ENCODE measurements at regions of chr12 and their contacts with region 1.

Region 1: DNA sequence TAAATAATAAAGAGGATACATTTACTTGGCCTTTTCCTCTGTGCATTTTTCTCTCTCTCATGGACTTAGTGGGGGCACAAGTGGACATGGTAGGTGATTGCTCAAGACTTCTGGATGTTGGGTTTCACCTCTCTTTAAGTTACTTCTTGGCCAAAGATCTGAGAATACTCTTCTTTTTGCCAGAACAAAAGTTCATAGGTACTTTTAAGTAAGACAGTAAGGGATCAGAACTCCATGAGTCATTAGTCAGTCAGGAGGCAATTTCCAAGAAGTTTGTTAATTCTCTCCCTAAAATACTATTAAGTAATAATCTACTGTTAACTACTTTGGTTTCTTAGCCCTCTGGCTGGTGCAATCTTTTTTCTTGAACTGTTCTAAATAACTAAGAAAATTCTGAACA is 84.2 kb downstream of the GRIP1 start:
- DNase-seq: no peak
- H3K4me3 ChIP-seq: no peak overlapping the region
- H3K27ac ChIP-seq: no peak overlapping the region
- H3K4me1 ChIP-seq: no peaks in the 10 kb centered on the region
- H3K27me3 ChIP-seq: no peaks in the 10 kb centered on the region
- CTCF ChIP-seq: no peak
- POLR2A ChIP-seq: no peak

Region 2: DNA sequence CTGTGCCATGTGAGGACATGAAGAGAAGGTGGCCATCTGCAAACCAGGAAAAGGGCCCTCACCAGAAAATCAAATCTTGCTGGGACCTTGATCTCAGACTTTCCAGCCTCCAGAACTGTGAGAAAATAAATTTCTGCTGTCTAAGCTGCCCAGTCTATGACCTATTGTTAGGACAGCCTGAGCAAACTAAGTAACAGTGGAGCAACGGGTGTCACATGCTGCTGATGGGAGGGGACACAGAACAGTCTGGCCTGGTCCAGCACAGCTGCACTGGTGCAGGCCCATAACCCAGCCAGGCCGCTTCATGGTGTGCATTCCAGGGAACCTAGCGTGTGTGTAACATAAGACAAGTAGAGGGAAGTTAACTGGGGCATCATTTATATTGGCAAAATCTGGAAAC is 42.1 kb after region 1 on chr12:
- intact Hi-C with region 1: loop called (anchors 2 kb)
- DNase-seq: no peak
- H3K4me3 ChIP-seq: no peak overlapping the region
- H3K27ac ChIP-seq: no peak overlapping the region
- H3K4me1 ChIP-seq: no peaks in the 10 kb centered on the region
- H3K27me3 ChIP-seq: no peaks in the 10 kb centered on the region
- CTCF ChIP-seq: no peak
- POLR2A ChIP-seq: no peak